IMR-90 (cell line): ENCODE measurements at regions of chr4 and their contacts with region 1.

Region 1: GRCh38 chr4:54228056-54228527 is 1.0 kb upstream of the PDGFRA start:
- DNase-seq: peak; percentile 82
- ATAC-seq: peak; percentile 48
- H3K4me3 ChIP-seq: peak overlapping the region; percentile 89
- H3K27ac ChIP-seq: peak overlapping the region; percentile 83
- H3K4me1 ChIP-seq: peaks cover 15% of the 10 kb centered on the region
- H3K27me3 ChIP-seq: no peaks in the 10 kb centered on the region
- CTCF ChIP-seq: peak; percentile 95
- POLR2A ChIP-seq: peak; percentile 26; the same call in 1 of the 2 replicates
- RAD21 ChIP-seq: peak; percentile 97

Region 2: DNA sequence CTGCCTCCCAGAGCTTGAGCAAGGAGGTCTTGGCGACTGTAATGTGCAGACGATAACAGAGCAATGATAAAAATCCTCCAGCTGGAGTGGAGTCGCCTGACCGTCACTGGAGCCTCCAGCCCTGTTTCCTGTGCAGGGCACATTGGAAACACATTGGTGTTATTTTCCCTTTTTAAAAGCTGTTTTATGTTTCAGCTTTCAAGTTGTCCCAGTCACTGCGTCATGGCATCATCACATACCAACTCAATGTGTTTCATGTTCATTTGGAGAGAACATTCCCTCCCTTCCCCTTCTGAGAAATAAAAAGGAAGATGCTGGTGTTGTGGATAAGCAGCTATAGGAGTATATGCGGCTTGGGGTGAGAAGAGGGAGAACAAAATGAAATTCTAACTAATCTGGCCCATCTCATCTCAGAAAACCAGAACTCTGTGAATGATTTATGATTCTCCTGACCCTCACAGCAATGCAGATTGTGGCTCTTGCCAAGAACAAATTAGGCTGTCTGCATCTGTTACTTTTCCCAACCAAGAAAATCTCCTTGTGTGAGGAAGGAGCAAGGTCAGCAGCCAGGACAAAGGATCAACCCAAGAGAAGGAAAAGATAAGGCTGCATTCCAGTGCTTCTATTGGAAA is 1231.7 kb before region 1 on chr4:
- CTCF ChIA-PET with region 1: no interaction called
- POLR2A ChIA-PET with region 1: no interaction called
- dilution Hi-C with region 1: no loop called
- in situ Hi-C with region 1: no loop called
- intact Hi-C with region 1: loop called (anchors 5 kb)
- DNase-seq: peak; percentile 67
- ATAC-seq: peak; percentile 72
- H3K4me3 ChIP-seq: no peak overlapping the region
- H3K27ac ChIP-seq: peak overlapping the region; percentile 18; the same call in 1 of the 2 replicates
- H3K4me1 ChIP-seq: peaks cover 16% of the 10 kb centered on the region
- H3K27me3 ChIP-seq: no peaks in the 10 kb centered on the region
- CTCF ChIP-seq: no peak
- POLR2A ChIP-seq: no peak
- RAD21 ChIP-seq: no peak

Region 3: DNA sequence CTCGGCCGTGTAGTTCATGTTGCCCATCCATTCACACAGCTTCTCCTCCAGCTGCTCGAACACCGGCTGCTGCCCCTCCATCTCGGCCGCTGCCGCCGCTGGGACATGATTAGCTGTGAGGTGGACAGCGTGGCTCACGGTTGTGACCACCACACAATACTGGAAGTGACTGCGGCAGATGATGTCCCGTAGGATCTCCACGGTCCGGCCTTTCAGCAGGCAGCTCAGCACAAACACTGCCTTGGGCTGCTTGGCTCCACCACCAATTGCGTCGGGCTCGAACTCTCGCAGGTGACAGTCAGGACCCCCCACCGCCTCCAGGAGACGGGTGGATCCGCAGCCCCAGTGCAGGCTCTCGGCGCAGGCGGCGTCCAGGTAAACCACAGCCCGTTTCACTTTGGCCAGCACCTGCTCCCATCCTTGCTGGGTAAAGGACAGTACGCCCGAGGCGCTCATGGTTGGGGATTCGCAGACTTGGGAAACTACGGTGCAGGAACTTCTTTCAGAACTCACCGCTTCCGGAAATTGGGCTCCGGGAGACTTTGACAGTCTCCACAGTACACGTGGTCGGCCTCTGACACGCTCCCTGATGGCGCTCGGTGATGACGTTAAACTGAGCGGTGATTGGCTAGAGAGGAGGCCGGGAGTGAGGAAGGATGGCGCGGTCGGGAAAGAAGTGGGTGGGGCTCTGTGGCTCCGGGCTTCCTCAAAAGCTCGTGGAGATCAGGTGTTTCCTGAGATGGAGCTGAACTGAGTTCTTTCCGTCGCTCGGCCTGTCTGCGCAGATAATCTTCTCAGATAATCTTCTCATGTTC is 862.4 kb before region 1 on chr4 and contains the start of gene SCFD2:
- CTCF ChIA-PET with region 1: no interaction called
- POLR2A ChIA-PET with region 1: no interaction called
- dilution Hi-C with region 1: no loop called
- in situ Hi-C with region 1: loop called (anchors 5 kb)
- intact Hi-C with region 1: no loop called
- DNase-seq: peak; percentile 97
- ATAC-seq: peak; percentile 97
- H3K4me3 ChIP-seq: peak within 1 kb of the TSS; percentile 79
- H3K27ac ChIP-seq: peak within 1 kb of the TSS; percentile 57
- H3K4me1 ChIP-seq: 0 out of 2 replicates have a peak, but pooled peaks cover 3% of the 10 kb centered on the region
- H3K27me3 ChIP-seq: no peaks in the 10 kb centered on the region
- CTCF ChIP-seq: no peak
- POLR2A ChIP-seq: peak; percentile 36; the same call in 1 of the 2 replicates
- RAD21 ChIP-seq: no peak
- total RNA-seq, gene SCFD2: 51.9 and 62.4 TPM in 2 replicates

Region 4: DNA sequence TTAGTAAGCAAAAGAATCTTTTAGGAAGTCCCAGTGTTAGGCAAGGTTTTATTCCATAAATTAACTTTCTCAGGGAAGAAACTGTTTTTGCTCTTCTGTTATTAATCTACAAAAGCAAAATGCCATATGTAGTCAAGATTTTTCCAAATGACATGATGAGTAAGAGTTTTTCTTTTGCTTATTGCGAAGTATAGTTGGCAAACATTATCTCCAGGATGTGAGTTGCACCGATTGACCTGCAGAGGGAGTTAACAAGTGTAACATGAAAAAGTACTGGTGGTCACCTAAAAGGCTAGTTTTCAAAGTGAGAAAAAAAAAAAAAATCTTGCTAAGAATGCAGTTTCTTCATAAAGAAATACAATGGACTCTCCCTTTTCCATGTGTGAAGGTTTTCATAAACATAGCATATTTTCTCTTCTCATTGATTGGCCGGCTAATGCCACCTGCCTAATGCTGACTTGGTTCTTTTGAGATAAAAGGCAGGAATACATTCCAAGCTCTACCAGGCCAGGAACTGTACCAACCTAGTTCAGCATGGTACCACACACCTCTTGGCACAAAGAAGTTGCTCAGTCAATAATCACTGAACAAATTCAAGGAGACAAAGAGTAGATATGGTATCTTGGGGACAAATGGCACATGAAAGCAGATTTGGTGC is 737.0 kb before region 1 on chr4:
- CTCF ChIA-PET with region 1: no interaction called
- POLR2A ChIA-PET with region 1: no interaction called
- dilution Hi-C with region 1: no loop called
- in situ Hi-C with region 1: loop called (anchors 10 kb)
- intact Hi-C with region 1: loop called (anchors 2 kb)
- DNase-seq: peak; percentile 93
- ATAC-seq: peak; percentile 80
- H3K4me3 ChIP-seq: no peak overlapping the region
- H3K27ac ChIP-seq: peak overlapping the region; percentile 93; the same call in 1 of the 2 replicates
- H3K4me1 ChIP-seq: peaks cover 11% of the 10 kb centered on the region
- H3K27me3 ChIP-seq: no peaks in the 10 kb centered on the region
- CTCF ChIP-seq: peak; percentile 71
- POLR2A ChIP-seq: no peak
- RAD21 ChIP-seq: peak; percentile 70

Region 5: DNA sequence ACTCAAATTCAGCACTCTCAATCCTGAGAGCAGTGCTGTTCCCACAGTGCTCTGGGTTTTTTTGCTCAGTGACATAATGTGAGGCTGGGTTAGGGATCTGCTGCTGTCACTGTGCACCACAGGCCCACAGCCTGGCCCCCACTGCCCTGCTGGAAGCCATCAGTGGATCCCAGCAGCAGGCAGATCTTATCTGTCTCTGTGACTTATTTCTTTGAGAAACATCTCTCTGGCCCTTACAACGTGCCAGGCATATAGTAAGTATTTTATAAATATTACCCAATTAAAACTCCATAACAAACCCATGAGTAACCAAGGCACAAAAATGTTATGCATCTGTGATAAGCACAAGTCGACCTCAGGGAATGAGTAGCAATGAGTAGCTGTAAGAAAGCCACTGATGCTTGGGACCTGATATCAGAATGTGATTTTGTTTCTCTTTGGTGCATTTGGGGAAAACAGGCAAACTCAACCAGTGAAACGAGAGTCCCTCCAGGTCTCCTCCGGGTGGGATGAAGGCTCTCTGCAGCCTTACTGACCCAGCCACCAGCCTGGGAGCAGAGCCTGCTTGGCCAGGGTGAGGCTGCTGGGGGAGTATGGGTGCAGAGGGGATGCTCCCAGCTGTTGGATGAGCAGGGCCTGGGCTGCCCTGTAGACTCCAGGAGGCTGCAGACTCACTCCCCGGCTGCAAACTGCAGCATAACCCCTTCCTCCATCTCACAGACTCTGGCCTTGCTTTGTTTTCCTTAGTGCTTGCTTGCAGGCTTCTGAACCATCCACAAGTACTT is 464.1 kb before region 1 on chr4:
- CTCF ChIA-PET with region 1: no interaction called
- POLR2A ChIA-PET with region 1: no interaction called
- dilution Hi-C with region 1: no loop called
- in situ Hi-C with region 1: no loop called
- intact Hi-C with region 1: loop called (anchors 5 kb)
- DNase-seq: peak; percentile 89
- ATAC-seq: peak; percentile 82
- H3K4me3 ChIP-seq: no peak overlapping the region
- H3K27ac ChIP-seq: peak overlapping the region; percentile 98
- H3K4me1 ChIP-seq: peaks cover 31% of the 10 kb centered on the region
- H3K27me3 ChIP-seq: no peaks in the 10 kb centered on the region
- CTCF ChIP-seq: no peak
- POLR2A ChIP-seq: no peak
- RAD21 ChIP-seq: no peak

Region 6: DNA sequence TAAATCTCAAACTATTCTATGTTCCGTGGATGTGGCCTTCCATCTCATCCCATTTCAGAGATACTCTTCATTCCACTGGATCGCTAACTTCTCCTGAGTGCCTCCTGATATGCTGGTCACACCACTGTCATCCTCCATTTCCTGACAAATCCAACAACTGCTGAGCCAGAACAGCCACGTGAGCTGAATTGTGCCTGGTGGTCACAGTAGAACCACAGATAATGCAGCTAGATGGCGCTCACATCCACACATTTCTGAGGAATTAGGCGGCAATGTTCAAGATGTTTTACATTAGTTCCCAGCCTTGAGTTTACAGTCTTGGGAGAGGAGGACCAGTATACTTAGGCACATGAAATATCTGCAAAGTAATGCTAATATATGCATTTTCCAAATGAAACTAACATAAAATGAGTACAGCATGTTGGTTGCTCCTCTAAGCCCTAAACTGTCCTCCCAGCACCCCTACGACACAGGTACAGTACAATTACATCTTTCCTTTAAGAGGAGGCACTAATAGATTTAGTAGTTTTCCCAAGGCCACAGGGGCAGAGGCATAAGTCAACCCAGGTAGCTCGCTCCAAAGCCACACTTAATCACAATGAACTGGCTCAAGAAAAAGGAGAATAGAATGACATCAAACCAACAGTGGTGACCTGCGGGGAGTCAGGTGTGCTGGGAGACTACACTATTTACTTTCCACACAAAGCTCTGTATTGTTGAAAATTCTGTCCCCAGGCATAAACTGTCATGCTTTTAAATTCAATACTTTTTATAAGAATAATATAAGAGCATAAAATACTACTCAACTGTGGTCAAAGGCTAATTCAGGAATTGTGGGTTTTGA is 297.9 kb before region 1 on chr4:
- CTCF ChIA-PET with region 1: interaction called, 4 read pairs
- POLR2A ChIA-PET with region 1: interaction called, 6 read pairs
- dilution Hi-C with region 1: no loop called
- in situ Hi-C with region 1: no loop called
- intact Hi-C with region 1: loop called (anchors 2 kb)
- DNase-seq: peak; percentile 93
- ATAC-seq: peak; percentile 75
- H3K4me3 ChIP-seq: no peak overlapping the region
- H3K27ac ChIP-seq: peak overlapping the region; percentile 20; the same call in 1 of the 2 replicates
- H3K4me1 ChIP-seq: peaks cover 14% of the 10 kb centered on the region
- H3K27me3 ChIP-seq: no peaks in the 10 kb centered on the region
- CTCF ChIP-seq: peak; percentile 85
- POLR2A ChIP-seq: no peak
- RAD21 ChIP-seq: peak; percentile 84

Region 7: DNA sequence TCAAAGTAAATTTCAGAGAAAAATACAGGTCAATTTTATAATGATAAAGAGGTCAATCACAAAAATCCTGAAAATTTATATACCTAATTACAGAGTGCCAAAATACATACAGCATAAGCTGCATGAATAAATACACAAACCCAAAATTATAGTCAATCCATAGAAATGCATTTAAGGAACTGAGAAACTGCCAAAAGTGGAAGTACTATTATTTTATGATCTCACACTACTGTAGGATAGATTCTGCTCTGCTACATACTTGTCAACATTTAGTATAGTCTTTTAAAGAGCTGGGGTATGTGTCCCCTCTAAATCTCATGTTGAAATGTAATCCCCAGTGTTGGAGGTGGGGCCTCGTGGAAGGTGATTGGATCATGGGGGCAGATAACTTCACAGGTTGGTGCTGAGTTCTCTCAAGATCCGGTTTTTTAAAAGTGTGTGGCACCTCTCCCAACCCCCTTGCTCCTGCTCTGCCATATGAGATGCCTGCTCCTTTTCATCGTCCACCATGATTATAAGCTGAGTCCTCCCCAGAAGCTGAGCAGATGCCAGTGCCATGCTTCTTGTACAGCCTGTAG is 195.4 kb before region 1 on chr4:
- CTCF ChIA-PET with region 1: no interaction called
- POLR2A ChIA-PET with region 1: no interaction called
- dilution Hi-C with region 1: no loop called
- in situ Hi-C with region 1: no loop called
- intact Hi-C with region 1: no loop called
- DNase-seq: no peak
- ATAC-seq: no peak
- H3K4me3 ChIP-seq: no peak overlapping the region
- H3K27ac ChIP-seq: no peak overlapping the region
- H3K4me1 ChIP-seq: peaks cover 3% of the 10 kb centered on the region; the same call in 1 of the 2 replicates
- H3K27me3 ChIP-seq: no peaks in the 10 kb centered on the region
- CTCF ChIP-seq: no peak
- POLR2A ChIP-seq: no peak
- RAD21 ChIP-seq: no peak